Ascending aorta (tissue), 2 donors: ENCODE measurements at regions of chr2 and their contacts with region 1.

Region 1: GRCh38 chr2:173965329-173966025 is at the start of gene SP3:
- DNase-seq: peak; percentile 84 to 98
- H3K4me3 ChIP-seq: peak within 1 kb of the TSS; percentile 93 to 98
- H3K27ac ChIP-seq: peak within 1 kb of the TSS; percentile 99
- H3K4me1 ChIP-seq: peaks cover 0 to 18% of the 10 kb centered on the region in 2 donors
- H3K27me3 ChIP-seq: no peaks in the 10 kb centered on the region
- CTCF ChIP-seq: no peak
- total RNA-seq, gene SP3: 58.0 TPM

Region 2: GRCh38 chr2:173075781-173076580 is 889.5 kb before region 1 on chr2 and contains the start of gene MAP3K20:
- intact Hi-C with region 1: loop called (anchors 10 kb)
- DNase-seq: peak; percentile 42 to 89
- H3K4me3 ChIP-seq: peak within 1 kb of the TSS; percentile 75 to 92
- H3K27ac ChIP-seq: peak within 1 kb of the TSS; percentile 96 to 100
- H3K4me1 ChIP-seq: peaks cover 3 to 23% of the 10 kb centered on the region in 2 donors
- H3K27me3 ChIP-seq: no peaks in the 10 kb centered on the region
- CTCF ChIP-seq: peak; percentile 16 to 49 (median 30)
- total RNA-seq, gene MAP3K20: 21.3 TPM

Region 3: DNA sequence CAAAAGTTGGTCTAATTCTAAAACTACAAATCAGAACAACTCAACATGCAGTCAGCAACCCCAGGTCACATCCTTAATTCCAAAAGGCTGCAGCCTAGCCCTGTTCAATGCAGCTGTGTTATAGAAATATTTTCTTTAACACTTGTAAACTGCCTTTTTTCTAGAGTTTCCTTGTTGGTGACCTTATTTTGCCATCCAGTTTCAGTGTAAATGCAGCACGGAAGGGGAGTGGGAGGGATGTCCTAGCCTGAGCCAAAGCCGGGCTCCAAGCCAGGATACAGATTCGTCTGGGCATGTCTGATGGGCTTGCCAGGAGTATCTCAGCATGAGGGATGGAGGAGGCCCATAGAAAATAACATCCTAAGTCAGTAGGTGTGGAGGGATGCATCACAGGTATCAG is 17.4 kb after region 1 on chr2:
- intact Hi-C with region 1: loop called (anchors 2 kb)
- DNase-seq: no peak
- H3K4me3 ChIP-seq: peak overlapping the region in 1 of 2 donors; percentile 22
- H3K27ac ChIP-seq: peak overlapping the region; percentile 79 to 83
- H3K4me1 ChIP-seq: peaks cover 13 to 52% of the 10 kb centered on the region in 2 donors
- H3K27me3 ChIP-seq: no peaks in the 10 kb centered on the region
- CTCF ChIP-seq: no peak

Region 4: GRCh38 chr2:174012347-174013314 is 47.2 kb after region 1 on chr2:
- intact Hi-C with region 1: loop called (anchors 2 kb)
- DNase-seq: peak in 1 of 2 donors; percentile 82
- H3K4me3 ChIP-seq: peak overlapping the region; percentile 53 to 66
- H3K27ac ChIP-seq: peak overlapping the region; percentile 94 to 96
- H3K4me1 ChIP-seq: peaks cover 3 to 36% of the 10 kb centered on the region in 2 donors
- H3K27me3 ChIP-seq: no peaks in the 10 kb centered on the region
- CTCF ChIP-seq: no peak

Region 5: DNA sequence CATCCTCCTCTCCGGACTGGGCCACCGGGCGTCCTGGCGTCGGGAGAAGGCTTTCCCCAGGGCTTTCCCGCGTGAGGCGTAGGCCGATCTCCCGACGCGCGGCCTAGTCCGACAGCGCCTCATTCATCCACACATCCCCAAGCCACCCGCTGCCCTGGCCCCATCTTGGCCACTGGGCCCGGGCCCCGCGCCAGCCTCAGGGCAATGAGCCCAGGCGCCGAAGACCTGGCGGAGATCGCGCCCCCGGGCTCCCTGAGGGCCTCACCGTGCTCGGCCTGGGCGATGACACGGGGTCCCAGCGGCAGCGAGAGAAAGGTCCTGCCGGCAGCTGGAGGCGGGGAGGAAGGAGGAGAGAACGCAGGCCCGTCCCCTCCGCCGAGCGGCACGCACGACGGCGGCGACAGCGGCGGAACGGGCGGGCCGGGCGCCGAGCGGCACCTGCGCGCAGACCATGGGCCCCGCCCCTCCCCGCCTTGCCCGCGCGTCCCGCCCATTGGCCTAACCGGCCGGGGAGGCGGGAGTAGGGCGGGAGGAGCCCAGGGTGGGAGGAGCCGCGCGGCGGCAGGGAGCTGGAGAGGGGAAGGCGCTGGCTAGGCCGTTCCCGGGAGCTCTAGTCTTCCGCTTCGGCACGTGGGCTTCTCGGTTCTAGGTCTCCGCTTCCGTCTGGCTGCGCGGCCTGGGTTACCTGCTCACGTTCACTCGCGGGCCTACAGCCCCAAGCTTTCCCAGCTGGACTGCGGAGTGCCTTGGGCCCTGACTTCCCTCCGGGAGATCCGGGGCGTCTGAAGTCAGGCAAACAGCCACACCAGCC is 282.9 kb after region 1 on chr2 and contains the start of gene OLA1:
- intact Hi-C with region 1: loop called (anchors 1 kb)
- DNase-seq: peak; percentile 75 to 96
- H3K4me3 ChIP-seq: peak within 1 kb of the TSS; percentile 77 to 91
- H3K27ac ChIP-seq: peak within 1 kb of the TSS; percentile 68 to 91
- H3K4me1 ChIP-seq: peaks cover 5 to 6% of the 10 kb centered on the region in 2 donors
- H3K27me3 ChIP-seq: no peaks in the 10 kb centered on the region
- CTCF ChIP-seq: peak in 1 of 3 experiments; percentile 3
- total RNA-seq, gene OLA1: 29.5 TPM